ENCODE measurements at regions of chr12 and their contacts with region 1.

Region 1: DNA sequence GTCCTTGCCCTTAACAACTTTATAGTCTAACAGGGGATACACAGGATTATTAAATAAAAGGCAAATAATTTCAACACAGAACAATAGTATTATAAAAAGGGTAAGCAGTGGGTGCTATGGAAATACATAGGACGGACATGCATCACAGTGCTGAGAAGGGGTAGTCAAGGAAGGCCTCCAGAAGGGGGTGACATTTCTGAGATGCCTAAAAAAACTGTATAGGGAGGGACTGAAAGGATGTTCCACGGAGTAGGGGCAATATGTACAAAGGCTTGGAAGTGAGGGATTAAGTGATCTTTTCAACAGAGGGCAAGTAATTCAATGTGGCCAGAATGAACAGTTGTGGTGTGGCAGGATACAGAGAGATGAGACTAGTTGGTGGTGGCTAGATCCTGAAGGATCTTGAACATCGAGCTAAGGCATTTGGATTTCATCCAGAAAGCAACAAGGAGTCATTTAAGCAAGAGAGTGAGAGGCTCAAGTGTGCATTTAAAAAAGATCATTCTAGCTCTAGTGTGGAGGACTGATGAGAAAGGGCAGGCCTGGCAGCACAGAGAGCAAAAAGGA is 8.9 kb upstream of the ATP5MC2 start:
- DNase-seq: no peak

Region 2: DNA sequence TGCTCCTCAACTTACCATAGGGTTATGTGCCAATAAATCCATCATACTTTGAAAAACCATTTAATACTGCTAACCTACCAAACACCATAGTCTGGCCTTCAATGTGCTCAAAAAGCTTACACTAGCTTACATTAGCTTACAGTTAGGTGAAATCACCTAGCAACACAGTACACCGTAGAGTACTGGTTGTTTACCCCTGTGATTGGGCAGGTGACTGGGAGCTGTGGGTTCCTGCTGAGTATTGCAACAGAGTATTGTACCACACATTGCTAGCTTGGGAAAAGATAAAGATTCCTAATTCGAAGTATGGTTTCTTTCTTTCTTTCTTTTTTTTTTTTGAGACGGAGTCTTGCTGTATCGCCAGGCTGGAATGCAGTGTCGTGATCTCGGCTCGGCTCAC is 14.4 kb before region 1 on chr12:
- intact Hi-C with region 1: loop called in 1 of 2 experiments (anchors 1 kb)
- DNase-seq: no peak

Region 3: GRCh38 chr12:53738406-53739213 is 53.9 kb after region 1 on chr12:
- intact Hi-C with region 1: loop called in 1 of 2 experiments (anchors 5 kb)
- DNase-seq: no peak

Measured in posterior vena cava (tissue), 2 donors.